ENCODE measurements at regions of chr19 and their contacts with region 1.

Region 1: GRCh38 chr19:49676690-49677231 is 310 bp upstream of the PRMT1 start:
- DNase-seq: peak; percentile 99
- H3K4me3 Mint-ChIP-seq: peak overlapping the region; percentile 89
- H3K27ac Mint-ChIP-seq: peak overlapping the region; percentile 99
- H3K4me1 Mint-ChIP-seq: peaks cover 29% of the 10 kb centered on the region
- H3K27me3 Mint-ChIP-seq: no peaks in the 10 kb centered on the region
- CTCF ChIP-seq: no peak

Region 2: GRCh38 chr19:49599378-49600295 is 77.1 kb before region 1 on chr19:
- CTCF ChIA-PET with region 1: no interaction called
- intact Hi-C with region 1: no loop called
- DNase-seq: no peak
- H3K4me3 Mint-ChIP-seq: no peak overlapping the region
- H3K27ac Mint-ChIP-seq: no peak overlapping the region
- H3K4me1 Mint-ChIP-seq: peaks cover 3% of the 10 kb centered on the region
- H3K27me3 Mint-ChIP-seq: no peaks in the 10 kb centered on the region
- CTCF ChIP-seq: no peak

Region 3: DNA sequence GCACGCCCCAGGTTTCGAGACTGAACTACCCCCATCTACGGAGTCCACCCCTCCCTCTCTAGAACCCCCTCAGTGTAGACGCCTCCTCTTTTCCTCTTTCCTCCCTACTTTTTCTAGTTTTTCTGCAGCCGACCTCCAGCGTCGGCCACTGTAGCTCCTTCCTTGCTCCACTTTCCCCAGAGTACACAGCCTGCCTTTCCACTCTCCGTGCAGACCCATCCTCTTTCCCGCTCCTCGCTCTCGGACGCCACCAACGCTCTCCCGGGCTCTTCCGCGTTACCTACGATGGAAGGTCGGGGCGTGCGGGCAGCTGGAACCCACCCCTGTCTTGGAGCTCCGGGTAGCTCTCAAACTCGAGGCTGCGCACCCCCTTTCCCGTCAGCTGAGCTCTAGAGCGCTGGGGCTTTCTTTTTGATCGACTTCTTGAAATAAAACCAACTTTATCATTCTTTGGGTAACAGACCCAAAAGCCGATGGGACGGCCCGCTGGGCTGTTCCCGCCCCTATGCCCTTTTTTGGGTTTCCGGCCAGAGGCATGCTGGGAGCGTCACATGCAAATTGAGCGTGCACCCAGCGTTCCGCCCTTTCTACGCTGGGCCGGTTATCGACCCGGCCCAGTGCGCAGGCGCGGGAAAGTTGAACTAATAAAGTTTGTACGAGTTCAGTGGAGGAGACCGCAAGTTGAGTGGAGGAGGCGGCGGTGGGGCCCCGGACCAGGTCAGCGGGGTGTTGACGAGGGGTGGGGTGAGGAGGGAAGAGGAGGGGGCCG is 11.2 kb before region 1 on chr19 and contains the starts of genes BCL2L12 and IRF3:
- CTCF ChIA-PET with region 1: interaction called, 10 read pairs
- intact Hi-C with region 1: no loop called
- DNase-seq: peak; percentile 99
- H3K4me3 Mint-ChIP-seq: peak within 1 kb of the TSS; percentile 83
- H3K27ac Mint-ChIP-seq: peak within 1 kb of the TSS; percentile 77
- H3K4me1 Mint-ChIP-seq: peaks cover 13% of the 10 kb centered on the region
- H3K27me3 Mint-ChIP-seq: no peaks in the 10 kb centered on the region
- CTCF ChIP-seq: no peak
- total RNA-seq, gene BCL2L12: 66.5 and 70.8 TPM in 2 replicates
- total RNA-seq, gene IRF3: 189 and 191 TPM in 2 replicates